ENCODE measurements at regions of chr11 and their contacts with region 1.

Region 1: DNA sequence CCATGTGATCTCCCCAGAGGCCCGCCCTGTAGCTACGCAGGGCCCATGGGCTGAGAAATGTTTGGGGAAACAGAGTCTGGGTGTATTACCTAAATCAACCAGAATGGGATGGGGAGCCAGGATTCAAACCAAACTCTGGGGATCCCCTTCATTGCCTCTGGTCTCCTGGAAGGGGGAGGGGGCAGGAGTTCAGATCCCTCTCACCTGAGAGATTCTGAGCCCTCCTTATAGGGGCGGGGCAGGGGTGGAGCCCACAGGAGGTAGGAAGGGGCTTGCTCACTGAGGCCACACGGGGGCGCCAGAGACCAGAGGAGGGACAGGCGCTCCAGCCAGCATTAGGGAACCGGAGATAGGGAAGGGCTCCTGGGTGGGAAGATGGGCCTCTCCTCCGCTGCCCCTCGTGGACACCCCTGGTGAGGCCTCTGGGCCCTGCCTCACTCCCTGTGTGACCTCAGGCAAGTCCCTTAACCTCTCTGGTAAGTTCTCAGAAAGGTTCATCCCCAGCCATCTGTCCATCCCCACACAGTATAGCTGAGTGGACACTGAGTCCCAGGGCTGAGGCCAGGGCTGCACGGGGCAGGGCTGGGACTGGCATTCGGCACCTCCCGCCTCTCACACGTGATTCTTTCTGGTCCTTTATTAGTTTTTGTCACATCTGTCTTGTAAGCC is 2.7 kb upstream of the CDC42BPG start:
- DNase-seq: peak; percentile 87
- ATAC-seq: peak; percentile 68
- H3K4me3 ChIP-seq: peak overlapping the region in 1 of 3 experiments; percentile 47; a peak in 2 of 6 replicates
- H3K27ac ChIP-seq: no peak overlapping the region
- H3K4me1 ChIP-seq: peaks cover 77% of the 10 kb centered on the region
- H3K27me3 ChIP-seq: no peaks in the 10 kb centered on the region; a peak in 1 of 5 replicates
- CTCF ChIP-seq: peak; percentile 99
- EP300 ChIP-seq: no peak
- POLR2A ChIP-seq: no peak
- RAD21 ChIP-seq: peak; percentile 98

Region 2: GRCh38 chr11:64787526-64788320 is 59.4 kb before region 1 on chr11:
- CTCF ChIA-PET with region 1: interaction called, 7 read pairs
- POLR2A ChIA-PET with region 1: no interaction called
- in situ Hi-C with region 1: no loop called
- intact Hi-C with region 1: loop called (anchors 10 kb)
- DNase-seq: peak; percentile 41
- ATAC-seq: peak; percentile 88
- H3K4me3 ChIP-seq: no peak overlapping the region
- H3K27ac ChIP-seq: no peak overlapping the region
- H3K4me1 ChIP-seq: no peaks in the 10 kb centered on the region
- H3K27me3 ChIP-seq: no peaks in the 10 kb centered on the region
- CTCF ChIP-seq: peak; percentile 92
- EP300 ChIP-seq: no peak
- POLR2A ChIP-seq: no peak
- RAD21 ChIP-seq: peak; percentile 78

Region 3: DNA sequence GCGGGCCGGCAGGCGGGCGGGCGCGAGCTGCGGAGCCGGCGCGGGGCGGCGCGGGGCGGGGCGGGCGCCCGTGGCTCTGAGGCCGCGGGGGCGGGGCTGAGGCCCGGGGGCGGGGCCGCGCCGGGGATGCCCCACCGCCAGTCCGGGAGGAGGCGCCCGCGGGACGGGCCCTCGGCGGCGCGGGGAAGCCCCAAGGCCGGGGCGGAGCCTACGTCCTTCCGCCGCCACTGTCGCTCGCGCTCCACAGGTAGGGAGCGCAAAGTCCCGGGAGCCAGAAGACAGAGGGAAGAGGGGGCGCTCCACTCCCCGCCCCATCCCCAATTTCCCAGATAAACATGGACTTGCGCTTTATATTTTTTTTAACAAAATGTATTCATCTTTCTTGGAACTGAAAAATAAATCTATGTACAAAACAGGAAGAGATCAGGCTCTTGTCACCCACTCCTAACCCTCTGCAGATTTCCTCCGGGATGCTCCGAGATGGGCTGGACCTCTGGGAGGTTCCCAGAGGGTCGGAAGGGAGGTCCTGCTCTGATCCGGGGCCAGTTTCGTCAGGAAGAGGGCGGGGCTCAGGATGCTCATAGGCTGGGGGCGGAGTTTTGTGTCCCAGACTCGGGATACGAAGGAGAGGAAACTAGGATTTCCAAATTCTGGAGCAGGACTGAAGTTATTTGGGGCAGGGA is 43.8 kb before region 1 on chr11 and contains the start of gene MAP4K2:
- CTCF ChIA-PET with region 1: no interaction called
- POLR2A ChIA-PET with region 1: interaction called, 5 read pairs
- in situ Hi-C with region 1: loop called (anchors 5 kb)
- intact Hi-C with region 1: loop called (anchors 5 kb)
- DNase-seq: peak; percentile 70
- ATAC-seq: peak; percentile 76
- H3K4me3 ChIP-seq: peak within 1 kb of the TSS; percentile 61 to 74 (median 66)
- H3K27ac ChIP-seq: peak within 1 kb of the TSS; percentile 63
- H3K4me1 ChIP-seq: peaks cover 56% of the 10 kb centered on the region
- H3K27me3 ChIP-seq: no peaks in the 10 kb centered on the region
- CTCF ChIP-seq: peak; percentile 65
- EP300 ChIP-seq: no peak
- POLR2A ChIP-seq: 0 out of 4 replicates have a peak, but pooled peaks of 1 of the 2 experiments have one; percentile 40
- RAD21 ChIP-seq: no peak
- total RNA-seq, gene MAP4K2: 7.8 and 8.3 TPM in 2 replicates

Region 4: GRCh38 chr11:64878494-64879243 is 31.5 kb after region 1 on chr11 and contains the start of gene EHD1:
- CTCF ChIA-PET with region 1: interaction called, 6 read pairs
- POLR2A ChIA-PET with region 1: interaction called, 30 read pairs
- in situ Hi-C with region 1: no loop called
- intact Hi-C with region 1: no loop called
- DNase-seq: peak; percentile 91
- ATAC-seq: peak; percentile 78
- H3K4me3 ChIP-seq: peak within 1 kb of the TSS; percentile 83 to 99 (median 98)
- H3K27ac ChIP-seq: peak within 1 kb of the TSS; percentile 62
- H3K4me1 ChIP-seq: peaks cover 62% of the 10 kb centered on the region
- H3K27me3 ChIP-seq: no peaks in the 10 kb centered on the region; a peak in 1 of 5 replicates
- CTCF ChIP-seq: peak; percentile 89
- EP300 ChIP-seq: peak in 1 of 2 experiments; percentile 9; a peak in 1 of 4 replicates
- POLR2A ChIP-seq: peak in 1 of 2 experiments; percentile 99; a peak in 2 of 4 replicates
- RAD21 ChIP-seq: peak; percentile 77
- total RNA-seq, gene EHD1: 22.0 and 26.6 TPM in 2 replicates

Region 5: GRCh38 chr11:64887757-64888405 is 40.7 kb after region 1 on chr11:
- CTCF ChIA-PET with region 1: interaction called, 72 read pairs
- POLR2A ChIA-PET with region 1: interaction called, 26 read pairs
- in situ Hi-C with region 1: loop called (anchors 5 kb)
- intact Hi-C with region 1: loop called (anchors 1 kb)
- DNase-seq: peak; percentile 46
- ATAC-seq: peak; percentile 63
- H3K4me3 ChIP-seq: peak overlapping the region; percentile 19 to 76 (median 42)
- H3K27ac ChIP-seq: peak overlapping the region; percentile 67
- H3K4me1 ChIP-seq: peaks cover 90% of the 10 kb centered on the region
- H3K27me3 ChIP-seq: no peaks in the 10 kb centered on the region; a peak in 1 of 5 replicates
- CTCF ChIP-seq: peak; percentile 94
- EP300 ChIP-seq: 0 out of 4 replicates have a peak, but pooled peaks of 1 of the 2 experiments have one; percentile 2
- POLR2A ChIP-seq: no peak; a peak in 1 of 4 replicates
- RAD21 ChIP-seq: peak; percentile 66

Region 6: GRCh38 chr11:64894070-64894796 is 47.1 kb after region 1 on chr11:
- CTCF ChIA-PET with region 1: interaction called, 72 read pairs
- POLR2A ChIA-PET with region 1: interaction called, 26 read pairs
- in situ Hi-C with region 1: loop called (anchors 5 kb)
- intact Hi-C with region 1: loop called (anchors 1 kb)
- DNase-seq: peak; percentile 76
- ATAC-seq: peak; percentile 76
- H3K4me3 ChIP-seq: peak overlapping the region; percentile 80 to 96 (median 95); a peak in 5 of 6 replicates
- H3K27ac ChIP-seq: peak overlapping the region; percentile 88
- H3K4me1 ChIP-seq: peaks cover 47% of the 10 kb centered on the region
- H3K27me3 ChIP-seq: no peaks in the 10 kb centered on the region; a peak in 1 of 5 replicates
- CTCF ChIP-seq: peak; percentile 99
- EP300 ChIP-seq: peak in 1 of 2 experiments; percentile 55; a peak in 2 of 4 replicates
- POLR2A ChIP-seq: no peak
- RAD21 ChIP-seq: peak; percentile 94

Region 7: GRCh38 chr11:64916775-64917662 is 69.9 kb after region 1 on chr11 and contains the start of gene ATG2A:
- CTCF ChIA-PET with region 1: no interaction called
- POLR2A ChIA-PET with region 1: no interaction called
- in situ Hi-C with region 1: no loop called
- intact Hi-C with region 1: loop called (anchors 1 kb)
- DNase-seq: peak; percentile 99
- ATAC-seq: peak; percentile 95
- H3K4me3 ChIP-seq: peak within 1 kb of the TSS; percentile 78 to 100 (median 93)
- H3K27ac ChIP-seq: peak within 1 kb of the TSS; percentile 63
- H3K4me1 ChIP-seq: peaks cover 36% of the 10 kb centered on the region
- H3K27me3 ChIP-seq: no peaks in the 10 kb centered on the region; a peak in 1 of 5 replicates
- CTCF ChIP-seq: no peak
- EP300 ChIP-seq: 0 out of 4 replicates have a peak, but pooled peaks of 1 of the 2 experiments have one; percentile 7
- POLR2A ChIP-seq: peak; percentile 73 to 93
- RAD21 ChIP-seq: peak; percentile 36; the same call in 1 of the 2 replicates
- total RNA-seq, gene ATG2A: 6.5 and 6.7 TPM in 2 replicates